H1 (cell line): ENCODE measurements at regions of chr4 and their contacts with region 1.

Region 1: DNA sequence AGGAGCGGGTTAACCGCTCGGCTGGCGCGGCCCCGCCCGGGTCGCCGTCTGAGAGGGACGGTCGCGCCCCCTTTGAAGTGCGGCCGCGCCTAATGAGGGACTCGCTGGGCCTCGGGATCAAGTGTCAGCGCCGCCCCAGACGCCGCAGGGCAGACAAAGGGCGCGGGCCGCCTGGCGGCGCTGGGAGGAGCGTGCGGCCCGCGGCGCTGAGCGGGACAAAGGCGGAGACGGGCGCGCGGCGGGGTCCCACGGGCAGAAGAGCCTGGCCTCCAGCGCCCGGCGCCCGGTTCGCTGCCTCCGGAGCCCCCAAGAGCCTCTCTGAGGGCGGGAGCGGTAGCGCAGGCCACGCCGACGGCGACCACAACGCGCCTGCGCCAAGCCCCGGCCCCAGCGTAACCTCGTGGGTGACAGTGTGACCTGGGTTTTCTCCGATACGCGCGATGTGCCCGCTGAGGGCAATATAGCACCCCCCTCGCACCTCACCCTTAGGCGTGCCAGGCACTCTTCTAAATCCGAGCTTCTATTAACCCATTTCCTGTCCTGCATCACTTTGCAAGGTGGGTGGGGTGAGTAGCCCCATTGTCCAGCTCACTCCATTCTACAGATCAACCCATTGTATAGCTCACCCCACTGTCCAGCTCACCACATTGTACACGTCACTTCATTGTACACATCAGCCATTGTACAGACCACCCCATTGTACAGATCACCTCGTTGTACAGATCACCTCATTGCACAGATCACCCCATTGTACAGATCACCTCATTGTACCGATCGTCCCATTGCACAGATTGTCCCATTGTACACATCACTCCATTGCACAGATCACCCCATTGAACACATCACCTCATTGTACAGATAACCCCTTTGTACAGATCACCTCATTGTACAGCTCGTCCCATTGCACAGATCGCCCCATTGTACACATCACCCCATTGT is 33.7 kb upstream of the STX18 start:
- DNase-seq: peak; percentile 54 to 83
- H3K4me3 ChIP-seq: peak overlapping the region; percentile 28 to 63 (median 50); a peak in 7 of 8 replicates
- H3K27ac ChIP-seq: no peak overlapping the region
- H3K4me1 ChIP-seq: peaks cover 4 to 11% (median 7%) of the 10 kb centered on the region in 4 experiments; a peak in 4 of 7 replicates
- H3K27me3 ChIP-seq: peaks cover 0 to 27% (median 16%) of the 10 kb centered on the region in 4 experiments; a peak in 6 of 7 replicates
- CTCF ChIP-seq: peak in 2 of 3 experiments; percentile 35 to 64; a peak in 3 of 4 replicates
- EP300 ChIP-seq: no peak
- POLR2A ChIP-seq: no peak
- RAD21 ChIP-seq: peak; percentile 15 to 48; a peak in 3 of 4 replicates

Region 2: DNA sequence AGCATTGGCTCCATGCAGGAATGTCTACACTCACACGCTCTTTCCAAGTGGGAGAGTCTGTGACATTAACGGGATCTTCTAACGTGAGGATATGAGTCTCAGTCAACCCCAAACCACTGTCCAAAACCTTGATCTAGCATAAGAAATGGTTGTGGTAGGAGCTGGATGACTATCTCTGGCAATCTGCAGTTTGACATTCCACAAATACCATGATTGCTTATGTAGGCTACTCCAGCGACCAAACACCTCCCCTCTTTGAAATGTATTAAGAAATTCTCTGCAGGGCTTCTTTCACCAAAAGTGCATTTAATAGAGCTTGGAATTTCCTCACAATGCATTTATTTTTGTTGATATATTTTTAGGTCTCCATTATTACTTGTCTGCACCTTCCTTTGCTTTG is 19.6 kb before region 1 on chr4:
- CTCF ChIA-PET with region 1: interaction called, 17 read pairs
- POLR2A ChIA-PET with region 1: interaction called, 5 read pairs
- DNase-seq: no peak
- H3K4me3 ChIP-seq: no peak overlapping the region
- H3K27ac ChIP-seq: no peak overlapping the region
- H3K4me1 ChIP-seq: peaks cover 0 to 4% (median 1%) of the 10 kb centered on the region in 4 experiments; a peak in 2 of 7 replicates
- H3K27me3 ChIP-seq: no peaks in the 10 kb centered on the region
- CTCF ChIP-seq: no peak
- EP300 ChIP-seq: no peak
- POLR2A ChIP-seq: no peak
- RAD21 ChIP-seq: no peak

Region 3: DNA sequence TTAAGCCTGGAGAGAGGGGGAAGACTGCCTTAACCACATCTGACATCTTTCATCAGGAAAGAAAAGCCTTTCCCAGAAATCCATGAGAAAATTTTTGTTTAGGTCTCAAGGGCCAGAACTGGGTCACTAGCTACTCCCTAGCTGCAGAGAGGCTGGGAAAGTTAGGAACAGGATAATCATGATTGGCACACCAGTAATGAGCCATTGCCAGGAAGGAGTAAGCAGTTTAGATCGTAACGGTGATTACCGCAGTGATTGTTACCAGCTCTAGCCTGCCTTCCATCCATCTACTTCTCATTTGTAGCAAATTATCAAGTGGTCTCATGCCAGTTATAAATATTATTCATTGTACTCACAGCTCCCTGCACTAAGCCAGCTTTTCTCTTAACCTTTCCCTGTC is 11.0 kb before region 1 on chr4:
- CTCF ChIA-PET with region 1: interaction called, 17 read pairs
- POLR2A ChIA-PET with region 1: no interaction called
- DNase-seq: no peak
- H3K4me3 ChIP-seq: no peak overlapping the region
- H3K27ac ChIP-seq: no peak overlapping the region
- H3K4me1 ChIP-seq: peaks cover 0 to 3% (median 0%) of the 10 kb centered on the region in 4 experiments; a peak in 1 of 7 replicates
- H3K27me3 ChIP-seq: no peaks in the 10 kb centered on the region; a peak in 1 of 7 replicates
- CTCF ChIP-seq: no peak
- EP300 ChIP-seq: no peak
- POLR2A ChIP-seq: no peak
- RAD21 ChIP-seq: no peak

Region 4: DNA sequence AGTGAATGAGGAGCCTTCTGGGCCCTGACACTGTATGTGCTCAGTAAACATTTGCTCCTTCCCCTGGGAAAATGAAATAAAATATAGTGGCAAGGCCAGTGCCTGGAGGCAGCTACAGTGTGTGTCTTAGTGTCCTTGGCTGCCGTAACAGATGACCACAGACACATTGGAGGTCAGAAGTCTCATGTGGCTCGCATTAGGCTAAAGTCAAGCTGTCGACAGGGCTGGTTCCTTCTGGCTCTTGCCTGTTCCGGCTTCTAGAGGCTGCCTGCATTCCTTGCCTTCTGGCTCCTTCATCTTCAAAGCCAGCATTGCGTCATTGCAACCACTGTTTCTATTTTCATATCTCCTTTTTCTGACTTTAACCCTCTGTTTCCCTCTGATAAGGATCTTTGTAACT is 49.9 kb after region 1 on chr4:
- CTCF ChIA-PET with region 1: interaction called, 12 read pairs
- POLR2A ChIA-PET with region 1: no interaction called
- DNase-seq: no peak
- H3K4me3 ChIP-seq: no peak overlapping the region
- H3K27ac ChIP-seq: no peak overlapping the region
- H3K4me1 ChIP-seq: peaks cover 0 to 6% (median 0%) of the 10 kb centered on the region in 4 experiments; a peak in 3 of 7 replicates
- H3K27me3 ChIP-seq: no peaks in the 10 kb centered on the region
- CTCF ChIP-seq: no peak
- EP300 ChIP-seq: no peak
- POLR2A ChIP-seq: no peak
- RAD21 ChIP-seq: no peak